Activated T-helper 1 cell treated with anti-CD3 and anti-CD28 coated beads, Interleukin-12 subunit alpha, Interleukin-12 subunit beta, Interleukin-2, Interleukin-4 antibody, amounts not matched to agents 30 ng/mL and 10 ng/mL and 1 ng/mL, durations not matched to agents 14 hours and 24 hours and 36 hours (primary cell): ENCODE measurements at regions of chr7 and their contacts with region 1.

Region 1: DNA sequence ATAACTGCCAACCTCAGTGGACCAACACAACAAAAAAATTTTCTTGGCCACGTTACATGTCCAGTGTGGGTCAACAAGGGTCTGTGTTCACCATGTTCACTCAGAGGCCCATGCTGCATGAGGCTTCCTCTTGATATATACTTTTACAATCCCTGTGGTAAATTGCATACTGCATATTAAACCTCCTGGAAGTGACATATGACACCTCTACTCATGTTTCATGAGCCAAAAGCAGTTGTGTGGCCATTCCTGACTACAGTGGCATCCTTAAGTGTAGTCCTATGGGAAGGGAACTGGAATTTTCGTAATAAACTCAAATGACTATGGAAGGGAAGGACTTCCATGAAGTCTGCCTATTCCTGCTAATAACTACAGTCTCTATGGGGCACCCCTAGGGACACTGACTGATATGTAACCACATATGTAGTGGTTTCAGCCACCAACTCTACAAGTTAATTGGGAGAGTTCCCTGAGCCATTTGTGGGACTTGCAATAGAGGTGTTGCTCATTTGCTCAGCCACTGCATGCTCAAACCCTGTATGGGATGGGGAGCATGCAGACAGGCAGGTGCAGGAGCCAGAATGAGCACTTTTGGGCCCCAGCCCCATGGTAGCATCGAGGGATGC is 9.7 kb downstream of the DYNC1I1 start:
- DNase-seq: no peak
- H3K4me3 Mint-ChIP-seq: no peak overlapping the region
- H3K27ac Mint-ChIP-seq: no peak overlapping the region
- H3K4me1 Mint-ChIP-seq: no peaks in the 10 kb centered on the region
- H3K27me3 Mint-ChIP-seq: no peaks in the 10 kb centered on the region

Region 2: GRCh38 chr7:95822717-95823116 is 40.6 kb after region 1 on chr7:
- intact Hi-C with region 1: loop called (anchors 1 kb)
- DNase-seq: no peak
- H3K4me3 Mint-ChIP-seq: no peak overlapping the region
- H3K27ac Mint-ChIP-seq: no peak overlapping the region
- H3K4me1 Mint-ChIP-seq: no peaks in the 10 kb centered on the region
- H3K27me3 Mint-ChIP-seq: no peaks in the 10 kb centered on the region